ENCODE measurements at regions of chr11 and their contacts with region 1.

Region 1: GRCh38 chr11:128323381-128323780 is 264.0 kb downstream of the ETS1 start:
- DNase-seq: peak; percentile 73
- ATAC-seq: peak; percentile 25
- H3K4me3 Mint-ChIP-seq: peak overlapping the region; percentile 73
- H3K27ac Mint-ChIP-seq: peak overlapping the region; percentile 95
- H3K4me1 Mint-ChIP-seq: peaks cover 92% of the 10 kb centered on the region
- H3K27me3 Mint-ChIP-seq: no peaks in the 10 kb centered on the region

Region 2: GRCh38 chr11:127825183-127825582 is 498.2 kb before region 1 on chr11:
- CTCF ChIA-PET with region 1: no interaction called
- POLR2A ChIA-PET with region 1: no interaction called
- DNase-seq: no peak
- ATAC-seq: no peak
- H3K4me3 Mint-ChIP-seq: no peak overlapping the region
- H3K27ac Mint-ChIP-seq: no peak overlapping the region
- H3K4me1 Mint-ChIP-seq: no peaks in the 10 kb centered on the region
- H3K27me3 Mint-ChIP-seq: peaks cover 1% of the 10 kb centered on the region

Region 3: GRCh38 chr11:128302425-128303186 is 20.8 kb before region 1 on chr11:
- CTCF ChIA-PET with region 1: interaction called, 125 read pairs
- POLR2A ChIA-PET with region 1: interaction called, 83 read pairs
- DNase-seq: peak; percentile 90
- ATAC-seq: peak; percentile 90
- H3K4me3 Mint-ChIP-seq: peak overlapping the region; percentile 89
- H3K27ac Mint-ChIP-seq: peak overlapping the region; percentile 96
- H3K4me1 Mint-ChIP-seq: peaks cover 79% of the 10 kb centered on the region
- H3K27me3 Mint-ChIP-seq: no peaks in the 10 kb centered on the region

Region 4: GRCh38 chr11:128336203-128336602 is 12.8 kb after region 1 on chr11:
- CTCF ChIA-PET with region 1: interaction called, 61 read pairs
- POLR2A ChIA-PET with region 1: interaction called, 18 read pairs
- DNase-seq: no peak
- ATAC-seq: no peak
- H3K4me3 Mint-ChIP-seq: no peak overlapping the region
- H3K27ac Mint-ChIP-seq: no peak overlapping the region
- H3K4me1 Mint-ChIP-seq: peaks cover 48% of the 10 kb centered on the region
- H3K27me3 Mint-ChIP-seq: no peaks in the 10 kb centered on the region

Region 5: GRCh38 chr11:128361451-128362020 is 38.2 kb after region 1 on chr11:
- CTCF ChIA-PET with region 1: no interaction called
- POLR2A ChIA-PET with region 1: no interaction called
- DNase-seq: no peak
- ATAC-seq: no peak
- H3K4me3 Mint-ChIP-seq: no peak overlapping the region
- H3K27ac Mint-ChIP-seq: no peak overlapping the region
- H3K4me1 Mint-ChIP-seq: no peaks in the 10 kb centered on the region
- H3K27me3 Mint-ChIP-seq: no peaks in the 10 kb centered on the region

Region 6: GRCh38 chr11:128412847-128413791 is 89.7 kb after region 1 on chr11:
- CTCF ChIA-PET with region 1: interaction called, 14 read pairs
- POLR2A ChIA-PET with region 1: no interaction called
- DNase-seq: no peak
- ATAC-seq: peak; percentile 44
- H3K4me3 Mint-ChIP-seq: no peak overlapping the region
- H3K27ac Mint-ChIP-seq: no peak overlapping the region
- H3K4me1 Mint-ChIP-seq: peaks cover 26% of the 10 kb centered on the region
- H3K27me3 Mint-ChIP-seq: no peaks in the 10 kb centered on the region

Region 7: DNA sequence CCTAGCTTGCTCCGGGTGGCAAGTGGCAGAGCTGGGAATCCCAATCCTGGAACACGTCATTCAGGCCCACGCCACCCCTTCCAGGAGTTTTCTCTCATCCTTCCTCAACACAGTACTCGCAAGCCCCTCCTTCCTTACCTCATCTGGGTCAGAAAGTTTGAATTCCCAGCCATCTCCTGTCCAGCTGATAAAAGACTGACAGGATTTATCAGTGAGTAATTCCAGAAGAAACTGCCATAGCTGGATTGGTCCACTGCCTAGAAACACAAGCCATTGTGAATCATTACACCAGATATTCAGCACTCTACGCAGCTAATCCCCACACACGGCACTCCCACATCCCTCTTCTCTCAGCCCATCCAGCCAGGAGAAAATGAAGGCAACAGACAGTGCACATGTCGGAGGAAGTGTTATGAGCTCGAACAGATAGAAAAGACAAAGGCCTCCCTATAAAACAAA is 140.0 kb after region 1 on chr11:
- CTCF ChIA-PET with region 1: interaction called, 77 read pairs
- POLR2A ChIA-PET with region 1: interaction called, 8 read pairs
- DNase-seq: no peak
- ATAC-seq: no peak
- H3K4me3 Mint-ChIP-seq: no peak overlapping the region
- H3K27ac Mint-ChIP-seq: peak overlapping the region; percentile 91
- H3K4me1 Mint-ChIP-seq: peaks cover 87% of the 10 kb centered on the region
- H3K27me3 Mint-ChIP-seq: no peaks in the 10 kb centered on the region

Region 8: DNA sequence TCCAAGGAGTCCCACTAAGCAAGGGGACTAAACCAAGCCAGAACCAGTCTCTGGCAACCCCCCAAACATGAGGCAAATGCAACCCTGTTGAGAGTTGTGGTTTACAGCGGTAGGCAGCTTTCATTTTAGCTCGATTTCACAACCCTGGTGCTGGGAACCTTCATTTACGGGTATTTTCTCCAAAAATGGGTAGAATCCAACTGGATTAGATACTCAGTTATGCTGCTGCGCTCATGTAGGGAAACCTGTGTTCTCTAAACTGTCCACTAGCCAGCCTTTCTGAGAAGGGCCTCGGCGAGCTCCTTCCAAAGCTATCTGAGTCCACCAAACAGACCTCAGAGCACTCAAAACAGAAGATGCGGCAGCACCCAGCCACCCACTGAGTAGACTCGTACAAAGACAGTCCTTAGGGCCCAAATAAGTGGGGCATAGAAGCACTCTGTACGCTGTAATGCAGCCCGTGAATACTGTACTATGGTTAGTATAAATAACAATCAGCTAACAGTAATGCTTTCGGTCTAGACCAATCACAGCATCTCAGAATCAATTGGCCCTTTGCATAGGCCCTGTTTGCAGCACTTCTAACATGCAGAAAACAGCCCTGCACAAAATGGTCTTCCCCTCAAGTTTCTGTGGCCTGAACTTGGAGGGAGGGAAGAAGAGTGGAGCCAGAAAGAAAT is 159.3 kb after region 1 on chr11:
- CTCF ChIA-PET with region 1: interaction called, 11 read pairs
- POLR2A ChIA-PET with region 1: interaction called, 5 read pairs
- DNase-seq: peak; percentile 65
- ATAC-seq: peak; percentile 70
- H3K4me3 Mint-ChIP-seq: peak overlapping the region; percentile 63
- H3K27ac Mint-ChIP-seq: peak overlapping the region; percentile 88
- H3K4me1 Mint-ChIP-seq: peaks cover 94% of the 10 kb centered on the region
- H3K27me3 Mint-ChIP-seq: no peaks in the 10 kb centered on the region

Region 9: DNA sequence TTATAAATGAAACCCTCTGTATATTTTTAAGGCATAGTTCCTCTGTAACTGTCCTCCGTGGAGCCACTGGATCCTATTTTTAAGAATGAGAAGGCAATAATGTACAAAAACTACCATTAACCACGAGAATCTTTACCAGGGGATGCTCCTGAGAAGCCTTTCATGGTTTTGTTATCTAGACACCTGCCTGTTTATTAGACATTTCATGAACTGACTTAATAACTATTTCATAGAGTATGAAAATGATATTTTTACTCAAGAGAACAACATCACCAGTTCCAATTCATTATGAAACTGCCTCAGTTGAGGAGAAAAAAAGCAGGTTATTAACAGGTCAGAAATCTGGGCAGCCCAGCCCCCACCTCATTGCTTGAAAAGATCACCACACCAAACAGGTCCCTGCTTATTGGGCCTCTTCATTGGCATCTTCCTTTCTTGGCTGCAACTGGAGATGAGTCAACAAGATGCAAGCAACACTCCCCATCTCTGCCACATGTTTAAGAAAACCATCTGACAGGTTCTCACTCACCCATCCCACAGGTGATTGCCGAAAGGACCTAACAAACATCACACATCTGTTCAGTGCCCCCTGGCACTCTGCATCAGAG is 236.2 kb after region 1 on chr11:
- CTCF ChIA-PET with region 1: no interaction called
- POLR2A ChIA-PET with region 1: no interaction called
- DNase-seq: no peak
- ATAC-seq: no peak
- H3K4me3 Mint-ChIP-seq: no peak overlapping the region
- H3K27ac Mint-ChIP-seq: no peak overlapping the region
- H3K4me1 Mint-ChIP-seq: peaks cover 13% of the 10 kb centered on the region
- H3K27me3 Mint-ChIP-seq: peaks cover 3% of the 10 kb centered on the region

Region 10: GRCh38 chr11:128582496-128583366 is 259.4 kb after region 1 on chr11:
- CTCF ChIA-PET with region 1: no interaction called
- POLR2A ChIA-PET with region 1: no interaction called
- DNase-seq: no peak
- ATAC-seq: no peak
- H3K4me3 Mint-ChIP-seq: no peak overlapping the region
- H3K27ac Mint-ChIP-seq: no peak overlapping the region
- H3K4me1 Mint-ChIP-seq: peaks cover 29% of the 10 kb centered on the region
- H3K27me3 Mint-ChIP-seq: no peaks in the 10 kb centered on the region